ENCODE measurements at regions of chr6 and their contacts with region 1.

Region 1: GRCh38 chr6:122184401-122184827 is 215.0 kb upstream of the HSF2 start:
- DNase-seq: no peak
- H3K4me3 ChIP-seq: no peak overlapping the region
- H3K27ac ChIP-seq: no peak overlapping the region
- H3K4me1 ChIP-seq: no peaks in the 10 kb centered on the region
- H3K27me3 ChIP-seq: no peaks in the 10 kb centered on the region
- CTCF ChIP-seq: peak in 2 of 3 donors; percentile 53 to 56
- EP300 ChIP-seq: no peak
- POLR2A ChIP-seq: no peak

Region 2: GRCh38 chr6:122033539-122034181 is 150.8 kb before region 1 on chr6:
- intact Hi-C with region 1: loop called in 1 of 4 experiments (anchors 10 kb)
- DNase-seq: no peak
- H3K4me3 ChIP-seq: no peak overlapping the region
- H3K27ac ChIP-seq: no peak overlapping the region
- H3K4me1 ChIP-seq: no peaks in the 10 kb centered on the region
- H3K27me3 ChIP-seq: no peaks in the 10 kb centered on the region
- CTCF ChIP-seq: peak; percentile 50 to 52 (median 50)
- EP300 ChIP-seq: no peak
- POLR2A ChIP-seq: no peak

Region 3: GRCh38 chr6:122459213-122459612 is 274.8 kb after region 1 on chr6:
- intact Hi-C with region 1: no loop called
- DNase-seq: no peak
- H3K4me3 ChIP-seq: no peak overlapping the region
- H3K27ac ChIP-seq: no peak overlapping the region
- H3K4me1 ChIP-seq: peaks cover 8% of the 10 kb centered on the region
- H3K27me3 ChIP-seq: no peaks in the 10 kb centered on the region
- CTCF ChIP-seq: no peak
- EP300 ChIP-seq: no peak
- POLR2A ChIP-seq: no peak